Mammary epithelial cell (primary cell): ENCODE measurements at regions of chr5 and their contacts with region 1.

Region 1: GRCh38 chr5:40879163-40879942 is 29.9 kb upstream of the C7 start:
- DNase-seq: peak; percentile 13
- H3K4me3 ChIP-seq: no peak overlapping the region
- H3K27ac ChIP-seq: no peak overlapping the region
- H3K4me1 ChIP-seq: no peaks in the 10 kb centered on the region
- H3K27me3 ChIP-seq: no peaks in the 10 kb centered on the region
- CTCF ChIP-seq: peak; percentile 42 to 49

Region 2: DNA sequence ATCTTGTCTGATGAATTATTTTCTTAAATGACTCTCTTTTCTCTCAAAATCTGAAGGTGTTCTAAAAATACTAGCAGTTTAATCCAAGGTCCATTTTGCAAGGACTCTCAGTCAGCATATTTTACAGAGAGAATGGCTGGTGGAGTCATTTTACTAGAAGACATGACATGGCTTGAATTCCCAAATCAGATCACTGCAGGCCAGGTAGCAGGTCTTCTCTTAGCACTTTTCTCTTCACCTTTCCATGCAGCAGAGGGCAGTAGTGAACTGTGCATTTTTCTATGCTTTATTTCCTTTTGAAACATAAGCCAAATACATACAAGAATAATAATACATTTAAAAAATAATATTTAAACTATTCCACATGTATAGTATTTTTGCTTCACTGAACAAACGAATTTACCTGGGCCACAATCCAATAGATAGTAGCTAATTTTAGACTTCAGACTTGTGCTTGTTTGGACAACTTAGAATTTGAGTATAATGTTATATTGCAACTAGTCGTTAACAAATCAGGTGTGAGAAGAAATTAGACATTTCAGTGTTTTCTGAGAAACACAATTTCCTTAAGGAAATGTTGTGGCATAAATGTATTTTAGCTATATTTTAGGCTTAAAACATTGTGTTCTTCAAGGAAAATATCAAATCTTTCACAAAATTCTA is 1165.2 kb before region 1 on chr5:
- CTCF ChIA-PET with region 1: no interaction called
- dilution Hi-C with region 1: no loop called
- in situ Hi-C with region 1: loop called in 1 of 2 experiments (anchors 25 kb)
- intact Hi-C with region 1: loop called (anchors 5 kb)
- DNase-seq: peak; percentile 64
- H3K4me3 ChIP-seq: no peak overlapping the region
- H3K27ac ChIP-seq: no peak overlapping the region
- H3K4me1 ChIP-seq: no peaks in the 10 kb centered on the region
- H3K27me3 ChIP-seq: peaks cover under 1% of the 10 kb centered on the region
- CTCF ChIP-seq: peak; percentile 76 to 83

Region 3: GRCh38 chr5:40165794-40166728 is 713.3 kb before region 1 on chr5:
- CTCF ChIA-PET with region 1: no interaction called
- dilution Hi-C with region 1: no loop called
- in situ Hi-C with region 1: no loop called
- intact Hi-C with region 1: loop called (anchors 2 kb)
- DNase-seq: peak; percentile 10
- H3K4me3 ChIP-seq: no peak overlapping the region
- H3K27ac ChIP-seq: no peak overlapping the region
- H3K4me1 ChIP-seq: no peaks in the 10 kb centered on the region
- H3K27me3 ChIP-seq: no peaks in the 10 kb centered on the region
- CTCF ChIP-seq: peak; percentile 10 to 46

Region 4: GRCh38 chr5:40755407-40756365 is 123.7 kb before region 1 on chr5 and contains the start of gene TTC33:
- CTCF ChIA-PET with region 1: no interaction called
- dilution Hi-C with region 1: no loop called
- in situ Hi-C with region 1: no loop called
- intact Hi-C with region 1: loop called (anchors 1 kb)
- DNase-seq: peak; percentile 92
- H3K4me3 ChIP-seq: peak within 1 kb of the TSS; percentile 81 to 89 (median 88)
- H3K27ac ChIP-seq: peak within 1 kb of the TSS; percentile 84
- H3K4me1 ChIP-seq: peaks cover 10% of the 10 kb centered on the region
- H3K27me3 ChIP-seq: no peaks in the 10 kb centered on the region
- CTCF ChIP-seq: peak; percentile 30 to 75
- total RNA-seq, gene TTC33: 9.6 to 9.7 TPM